A549 (cell line): ENCODE measurements at regions of chr17 and their contacts with region 1.

Region 1: DNA sequence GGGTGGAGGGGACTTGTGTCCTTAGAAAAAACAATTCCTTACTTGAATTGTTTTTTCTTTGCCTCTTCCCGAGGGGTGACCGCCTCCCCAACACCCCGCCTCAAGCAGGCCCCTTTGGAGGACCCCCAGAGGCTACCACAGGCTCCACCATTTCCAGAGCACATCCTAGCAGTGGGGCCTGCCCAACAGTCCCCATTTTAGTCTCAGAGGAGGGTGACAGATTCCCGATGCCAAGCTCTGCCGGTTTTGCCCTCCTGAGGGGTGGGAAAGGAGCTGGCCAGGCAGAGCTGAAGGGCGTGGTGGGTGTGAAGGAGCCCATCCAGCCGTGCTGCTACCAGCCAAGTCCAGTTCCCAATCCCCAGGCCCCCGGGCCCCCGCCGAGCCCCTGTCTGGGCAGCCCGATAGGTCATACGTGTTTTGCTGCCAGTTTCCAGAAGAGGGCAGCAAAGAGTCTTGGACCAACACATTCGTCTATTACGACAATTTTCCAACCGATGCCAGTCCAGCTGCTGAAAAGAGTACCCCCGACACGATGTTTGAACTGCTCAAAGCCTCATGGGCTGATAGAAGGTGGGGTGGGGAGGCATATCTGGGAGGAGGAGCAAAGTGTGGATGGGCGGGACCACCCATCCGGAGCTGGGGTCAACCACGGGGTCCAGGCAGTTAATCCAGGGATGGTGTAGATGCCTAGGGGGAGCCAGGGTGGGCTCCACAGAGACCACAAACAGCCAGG is 18.8 kb upstream of the GAA start:
- DNase-seq: peak; percentile 81 to 89
- ATAC-seq: peak; percentile 79 to 87
- H3K4me3 ChIP-seq: no peak overlapping the region; the same call in 2 of the 3 replicates
- H3K27ac ChIP-seq: peak overlapping the region; percentile 63 to 69
- H3K4me1 ChIP-seq: peaks cover 7% of the 10 kb centered on the region; the same call in 2 of the 3 replicates
- CTCF ChIP-seq: peak; percentile 90
- EP300 ChIP-seq: no peak
- POLR2A ChIP-seq: no peak
- RAD21 ChIP-seq: peak; percentile 84 to 86

Region 2: GRCh38 chr17:79997011-79997660 is 85.4 kb before region 1 on chr17:
- CTCF ChIA-PET with region 1: interaction called, 10 read pairs
- POLR2A ChIA-PET with region 1: no interaction called
- DNase-seq: no peak
- ATAC-seq: no peak
- H3K4me3 ChIP-seq: no peak overlapping the region
- H3K27ac ChIP-seq: peak overlapping the region; percentile 28 to 48; a peak in 3 of 6 replicates
- H3K4me1 ChIP-seq: peaks cover 33% of the 10 kb centered on the region
- CTCF ChIP-seq: no peak
- EP300 ChIP-seq: no peak
- POLR2A ChIP-seq: no peak
- RAD21 ChIP-seq: no peak

Region 3: DNA sequence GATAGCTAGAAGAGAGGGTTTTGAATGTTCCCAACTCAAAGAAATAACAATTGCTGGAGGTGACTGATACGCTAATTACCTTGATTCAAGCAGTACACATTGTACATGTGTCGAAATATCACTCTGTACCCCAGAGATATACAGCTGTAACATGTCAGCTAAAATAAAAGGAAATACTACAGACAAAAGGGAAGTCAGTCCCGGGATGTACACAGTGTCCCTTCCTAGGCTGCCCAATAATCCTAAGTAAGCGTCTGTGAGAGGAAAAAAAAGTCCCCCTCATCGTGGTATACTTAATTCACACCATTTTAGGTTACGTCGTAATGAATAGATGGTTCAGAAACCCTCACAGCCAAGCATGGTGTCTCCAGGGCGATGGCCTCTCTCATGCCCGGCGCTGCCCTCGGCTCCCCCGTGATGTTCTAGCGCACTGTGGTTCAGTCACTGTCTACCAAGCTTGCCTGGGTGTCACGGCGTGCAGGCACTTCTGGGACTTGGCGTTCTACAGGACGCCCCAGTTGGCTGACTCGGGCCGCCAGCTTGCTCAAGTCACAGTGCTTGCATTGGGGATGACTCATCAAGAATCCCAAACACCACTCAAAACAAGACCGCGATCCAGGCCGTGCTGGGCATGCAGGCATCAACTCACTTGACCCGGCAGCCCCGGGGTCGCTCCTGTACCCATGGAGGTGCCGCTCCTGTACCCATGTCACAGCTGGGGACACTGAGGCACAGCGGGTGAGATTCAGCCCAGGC is 18.6 kb before region 1 on chr17:
- CTCF ChIA-PET with region 1: interaction called, 58 read pairs
- POLR2A ChIA-PET with region 1: no interaction called
- DNase-seq: peak; percentile 83 to 93
- ATAC-seq: peak; percentile 88 to 92
- H3K4me3 ChIP-seq: no peak overlapping the region
- H3K27ac ChIP-seq: peak overlapping the region; percentile 70 to 88
- H3K4me1 ChIP-seq: peaks cover 17% of the 10 kb centered on the region
- CTCF ChIP-seq: no peak
- EP300 ChIP-seq: no peak
- POLR2A ChIP-seq: no peak
- RAD21 ChIP-seq: no peak

Region 4: GRCh38 chr17:80092959-80093358 is 10.4 kb after region 1 on chr17:
- CTCF ChIA-PET with region 1: interaction called, 63 read pairs
- POLR2A ChIA-PET with region 1: no interaction called
- DNase-seq: no peak
- ATAC-seq: no peak
- H3K4me3 ChIP-seq: no peak overlapping the region
- H3K27ac ChIP-seq: no peak overlapping the region
- H3K4me1 ChIP-seq: no peaks in the 10 kb centered on the region
- CTCF ChIP-seq: no peak
- EP300 ChIP-seq: no peak
- POLR2A ChIP-seq: no peak
- RAD21 ChIP-seq: no peak

Region 5: DNA sequence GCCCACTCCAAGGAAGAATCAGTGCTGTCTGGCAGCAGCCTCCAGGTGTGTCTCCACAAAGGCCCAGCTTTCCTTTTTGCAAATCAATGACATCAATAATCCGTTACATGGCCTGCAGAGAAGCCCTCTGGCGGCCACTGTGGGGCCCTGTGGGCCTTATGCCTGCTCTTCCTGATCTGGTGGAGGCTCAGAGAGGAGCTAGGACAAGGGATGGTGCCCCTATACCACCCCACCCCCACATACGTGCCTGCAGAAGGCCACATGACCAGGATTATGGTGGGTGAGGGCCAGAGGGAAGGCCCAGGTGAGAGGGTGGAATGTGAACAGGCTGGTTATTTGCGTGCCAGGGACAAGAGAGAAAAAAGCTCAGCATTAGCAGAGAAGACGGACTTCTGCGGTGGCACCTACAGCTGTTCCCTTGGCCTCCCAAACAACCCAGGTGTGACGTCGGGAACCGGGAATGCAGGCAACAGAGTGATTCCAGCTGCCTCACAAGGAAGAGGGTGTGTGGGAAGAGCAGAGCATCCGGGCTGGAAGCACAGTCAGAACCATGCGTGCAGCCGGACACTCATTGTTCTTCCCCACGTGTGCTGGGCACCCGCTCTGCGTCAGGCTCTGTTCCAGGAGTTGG is 41.9 kb after region 1 on chr17:
- CTCF ChIA-PET with region 1: interaction called, 18 read pairs
- POLR2A ChIA-PET with region 1: no interaction called
- DNase-seq: peak; percentile 45 to 53
- ATAC-seq: peak; percentile 71 to 87
- H3K4me3 ChIP-seq: no peak overlapping the region
- H3K27ac ChIP-seq: no peak overlapping the region
- H3K4me1 ChIP-seq: no peaks in the 10 kb centered on the region
- CTCF ChIP-seq: peak; percentile 36
- EP300 ChIP-seq: no peak
- POLR2A ChIP-seq: no peak; the same call in 1 of the 2 replicates
- RAD21 ChIP-seq: peak; percentile 19 to 32; a peak in 2 of 5 replicates

Region 6: GRCh38 chr17:80248920-80249710 is 166.5 kb after region 1 on chr17:
- CTCF ChIA-PET with region 1: interaction called, 46 read pairs
- POLR2A ChIA-PET with region 1: no interaction called
- DNase-seq: no peak
- ATAC-seq: peak; percentile 19 to 29; a peak in 4 of 6 replicates
- H3K4me3 ChIP-seq: no peak overlapping the region
- H3K27ac ChIP-seq: 0 out of 6 replicates have a peak overlapping the region, but pooled peaks of 1 of the 2 experiments have one; percentile 11
- H3K4me1 ChIP-seq: peaks cover 22% of the 10 kb centered on the region
- CTCF ChIP-seq: no peak
- EP300 ChIP-seq: no peak
- POLR2A ChIP-seq: no peak
- RAD21 ChIP-seq: peak in 1 of 2 experiments; percentile 36; a peak in 1 of 5 replicates